Activated T-helper 1 cell treated with anti-CD3 and anti-CD28 coated beads, Interleukin-12 subunit alpha, Interleukin-12 subunit beta, Interleukin-2, Interleukin-4 antibody, amounts not matched to agents 30 ng/mL and 10 ng/mL and 1 ng/mL, durations not matched to agents 14 hours and 24 hours and 36 hours (primary cell): ENCODE measurements at regions of chr12 and their contacts with region 1.

Region 1: GRCh38 chr12:50763639-50764285 is at the start of gene ATF1:
- DNase-seq: peak; percentile 91
- H3K4me3 Mint-ChIP-seq: peak within 1 kb of the TSS; percentile 97
- H3K27ac Mint-ChIP-seq: peak within 1 kb of the TSS; percentile 98
- H3K4me1 Mint-ChIP-seq: peaks cover 37% of the 10 kb centered on the region
- H3K27me3 Mint-ChIP-seq: no peaks in the 10 kb centered on the region
- total RNA-seq, gene ATF1: 65.7 and 65.8 TPM in 2 replicates

Region 2: DNA sequence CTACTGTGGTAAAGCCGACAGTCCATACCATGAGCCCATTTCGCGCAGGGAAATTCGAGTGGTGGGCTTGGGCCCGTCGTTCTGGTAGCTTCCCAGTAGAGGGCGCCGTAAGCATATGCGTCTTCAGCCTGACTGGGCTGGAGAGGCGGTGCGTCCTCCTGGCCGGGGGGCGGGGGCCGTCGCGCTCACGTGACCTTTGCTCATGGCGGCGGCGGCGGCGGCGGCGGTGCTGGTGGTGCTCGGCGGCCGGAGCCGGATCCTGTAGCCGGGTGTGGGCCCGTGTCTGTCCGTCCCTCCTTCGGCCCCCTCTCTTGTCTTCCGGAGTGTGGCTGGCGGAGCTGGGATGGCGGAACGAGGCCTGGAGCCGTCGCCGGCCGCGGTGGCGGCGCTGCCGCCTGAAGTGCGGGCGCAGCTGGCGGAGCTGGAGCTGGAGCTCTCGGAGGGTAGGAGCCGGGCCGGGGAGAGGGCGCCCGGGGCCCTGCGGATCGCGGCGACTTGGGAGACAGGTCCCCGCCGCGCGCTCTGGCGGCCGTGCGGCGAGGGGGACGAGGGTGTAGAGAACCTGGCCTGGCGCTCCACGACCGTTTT is 258.9 kb before region 1 on chr12 and contains the start of gene DIP2B:
- intact Hi-C with region 1: loop called (anchors 10 kb)
- DNase-seq: peak; percentile 93
- H3K4me3 Mint-ChIP-seq: peak within 1 kb of the TSS; percentile 95
- H3K27ac Mint-ChIP-seq: peak within 1 kb of the TSS; percentile 95
- H3K4me1 Mint-ChIP-seq: peaks cover 51% of the 10 kb centered on the region
- H3K27me3 Mint-ChIP-seq: peaks cover 2% of the 10 kb centered on the region
- total RNA-seq, gene DIP2B: 26.7 and 27.6 TPM in 2 replicates

Region 3: DNA sequence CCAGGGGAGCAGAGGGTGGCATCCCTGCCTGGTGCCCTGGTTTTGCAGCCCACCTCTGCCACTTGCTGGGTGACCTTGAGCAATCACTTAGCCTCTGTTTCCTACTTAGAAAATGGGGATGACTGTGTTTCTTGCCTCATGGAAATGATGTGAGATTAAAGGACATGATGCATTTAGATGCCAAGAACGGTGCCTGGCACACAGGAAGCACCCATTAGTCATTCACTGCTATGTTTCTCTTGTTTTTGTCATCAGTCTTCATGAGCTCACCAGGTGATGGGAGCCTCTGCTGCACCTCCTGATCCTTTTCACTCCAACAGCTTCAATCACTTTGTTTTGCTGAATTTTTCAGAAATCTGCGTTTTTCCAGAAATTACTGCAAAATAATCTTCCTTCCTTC is 23.5 kb before region 1 on chr12:
- intact Hi-C with region 1: no loop called
- DNase-seq: no peak
- H3K4me3 Mint-ChIP-seq: no peak overlapping the region
- H3K27ac Mint-ChIP-seq: no peak overlapping the region
- H3K4me1 Mint-ChIP-seq: no peaks in the 10 kb centered on the region
- H3K27me3 Mint-ChIP-seq: no peaks in the 10 kb centered on the region

Region 4: DNA sequence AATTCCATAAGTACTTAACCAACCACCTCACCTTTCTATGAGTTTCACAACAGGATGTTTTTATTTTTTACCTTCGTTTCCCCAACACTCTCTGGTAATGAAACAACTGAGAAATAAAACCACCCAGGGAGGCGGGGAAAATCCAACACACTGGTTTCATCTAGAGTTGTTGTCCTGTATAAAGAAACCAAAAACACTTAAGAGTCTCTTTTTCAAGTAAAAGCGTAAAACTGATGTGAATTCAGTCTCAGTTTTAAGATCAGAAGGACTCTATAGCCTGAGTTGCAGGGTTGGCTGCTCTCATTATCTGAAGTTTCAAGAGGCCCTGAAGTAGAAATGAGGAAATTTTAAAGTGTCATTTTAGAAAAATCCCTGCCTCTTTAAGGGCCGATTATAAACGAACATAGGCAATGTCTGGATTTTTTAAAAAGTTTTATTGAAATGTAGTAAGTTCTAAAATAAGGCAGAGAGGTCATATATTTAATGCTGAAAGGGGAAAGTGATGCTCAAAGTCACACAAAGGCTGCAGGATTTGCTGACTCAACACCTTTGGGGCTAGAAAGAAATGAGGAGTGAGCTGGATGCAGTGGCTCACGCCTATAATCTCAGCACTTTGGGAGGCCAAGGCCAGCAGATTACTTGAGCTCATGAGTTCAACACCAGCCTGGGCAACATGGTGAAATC is 215.7 kb after region 1 on chr12:
- intact Hi-C with region 1: loop called (anchors 1 kb)
- DNase-seq: peak; percentile 67
- H3K4me3 Mint-ChIP-seq: peak overlapping the region; percentile 71
- H3K27ac Mint-ChIP-seq: peak overlapping the region; percentile 96
- H3K4me1 Mint-ChIP-seq: peaks cover 38% of the 10 kb centered on the region
- H3K27me3 Mint-ChIP-seq: no peaks in the 10 kb centered on the region

Region 5: DNA sequence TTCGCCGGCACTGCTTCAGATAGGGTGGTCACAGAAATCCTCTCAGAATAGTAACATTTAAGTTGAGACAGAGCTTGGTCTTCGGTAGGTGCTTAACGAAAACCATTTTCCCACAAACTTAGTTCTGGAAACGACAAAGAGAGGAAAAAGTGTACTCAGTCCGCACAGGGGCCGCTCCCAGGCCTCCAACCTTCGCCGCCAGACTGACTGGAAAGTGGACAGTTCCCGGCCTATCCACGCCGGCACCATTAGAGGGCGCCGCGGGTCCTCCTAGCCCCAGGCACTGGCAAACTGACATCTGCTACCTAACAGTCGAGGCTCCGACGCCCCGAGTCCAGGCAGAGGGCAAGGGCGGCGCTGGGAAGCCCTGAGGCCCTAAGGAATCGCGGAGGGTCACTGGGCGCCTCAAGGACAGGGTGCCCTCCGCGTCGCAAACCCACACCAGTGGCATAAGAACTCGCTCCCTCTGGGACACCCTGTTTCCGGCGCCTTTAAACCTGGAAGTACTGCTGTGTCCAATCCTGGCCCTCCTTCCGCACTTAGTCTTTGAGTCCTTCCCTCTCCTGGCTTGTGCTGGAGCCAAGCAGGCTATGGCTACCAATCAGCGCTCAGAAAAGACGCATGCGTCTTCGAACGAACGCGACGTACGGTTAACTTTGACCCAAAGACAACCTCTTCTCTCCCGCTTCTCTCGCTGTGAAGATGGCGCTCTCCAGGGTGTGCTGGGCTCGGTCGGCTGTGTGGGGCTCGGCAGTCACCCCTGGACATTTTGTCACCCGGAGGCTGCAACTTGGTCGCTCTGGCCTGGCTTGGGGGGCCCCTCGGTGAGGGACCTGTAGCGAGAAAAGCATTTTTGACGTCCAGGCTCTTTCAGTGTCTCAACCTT is 284.1 kb after region 1 on chr12 and contains the start of gene LETMD1:
- intact Hi-C with region 1: loop called (anchors 2 kb)
- DNase-seq: peak; percentile 91
- H3K4me3 Mint-ChIP-seq: peak within 1 kb of the TSS; percentile 95
- H3K27ac Mint-ChIP-seq: peak within 1 kb of the TSS; percentile 87
- H3K4me1 Mint-ChIP-seq: peaks cover 28% of the 10 kb centered on the region
- H3K27me3 Mint-ChIP-seq: no peaks in the 10 kb centered on the region
- total RNA-seq, gene LETMD1: 70.7 and 74.3 TPM in 2 replicates

Region 6: DNA sequence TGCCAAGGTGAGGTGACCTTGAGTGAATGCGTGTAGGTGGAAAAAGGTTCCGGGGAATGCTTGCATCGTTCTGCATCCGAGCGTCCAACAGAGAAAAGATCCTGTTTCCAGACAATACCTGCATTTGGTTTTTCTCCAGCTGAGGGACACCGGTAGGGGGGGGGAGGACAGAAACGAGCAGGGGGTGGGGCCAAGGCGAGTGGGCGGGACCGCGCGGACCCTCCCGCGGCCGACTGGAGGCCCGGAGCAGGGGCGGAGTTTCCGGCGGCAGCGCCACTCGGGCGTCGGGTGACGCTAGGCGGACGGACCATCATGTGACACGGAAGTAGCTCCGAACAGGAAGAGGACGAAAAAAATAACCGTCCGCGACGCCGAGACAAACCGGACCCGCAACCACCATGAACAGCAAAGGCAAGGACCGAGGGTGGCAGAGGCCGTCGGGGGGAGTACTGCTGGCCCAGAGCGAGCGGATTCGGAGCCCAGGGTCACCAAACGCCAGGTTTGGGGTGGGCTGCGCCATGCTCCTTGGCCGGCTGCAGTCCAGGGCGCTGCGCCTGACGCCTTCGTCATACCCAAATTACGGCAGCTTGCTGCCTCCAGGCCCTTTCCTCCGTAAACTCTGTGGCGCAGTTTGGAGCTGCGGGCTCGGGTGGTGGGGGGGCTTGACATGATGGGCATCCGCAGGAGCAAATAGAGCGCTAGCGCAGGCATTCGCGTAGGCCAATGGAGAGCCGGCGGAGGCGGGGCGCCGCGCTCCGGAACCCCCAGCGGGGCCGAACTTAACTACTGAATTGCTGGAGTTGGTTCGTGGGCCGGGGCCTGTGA is 475.0 kb after region 1 on chr12 and contains the start of gene DAZAP2:
- intact Hi-C with region 1: loop called (anchors 2 kb)
- DNase-seq: peak; percentile 92
- H3K4me3 Mint-ChIP-seq: peak within 1 kb of the TSS; percentile 91
- H3K27ac Mint-ChIP-seq: peak within 1 kb of the TSS; percentile 99
- H3K4me1 Mint-ChIP-seq: peaks cover 45% of the 10 kb centered on the region
- H3K27me3 Mint-ChIP-seq: no peaks in the 10 kb centered on the region
- total RNA-seq, gene DAZAP2: 163 and 169 TPM in 2 replicates